T-cell (primary cell): ENCODE measurements at regions of chr11 and their contacts with region 1.

Region 1: GRCh38 chr11:110463153-110463552 is 33.4 kb downstream of the FDX1 start:
- DNase-seq: peak in 18 of 35 experiments; percentile 2 to 47 (median 6)
- ATAC-seq: peak in 1 of 4 experiments; percentile 43
- H3K4me3 ChIP-seq: no peak overlapping the region
- H3K4me3 Mint-ChIP-seq: no peak overlapping the region
- H3K27ac ChIP-seq: no peak overlapping the region
- H3K27ac Mint-ChIP-seq: no peak overlapping the region
- H3K4me1 ChIP-seq: no peaks in the 10 kb centered on the region
- H3K4me1 Mint-ChIP-seq: peaks cover 0 to 5% (median 4%) of the 10 kb centered on the region in 3 donors
- H3K27me3 ChIP-seq: no peaks in the 10 kb centered on the region
- H3K27me3 Mint-ChIP-seq: no peaks in the 10 kb centered on the region

Region 2: GRCh38 chr11:109984634-109985289 is 478.4 kb before region 1 on chr11:
- CTCF ChIA-PET with region 1: no interaction called
- POLR2A ChIA-PET with region 1: no interaction called
- DNase-seq: peak in 1 of 35 experiments; percentile 1
- ATAC-seq: no peak
- H3K4me3 ChIP-seq: no peak overlapping the region
- H3K4me3 Mint-ChIP-seq: no peak overlapping the region
- H3K27ac ChIP-seq: no peak overlapping the region
- H3K27ac Mint-ChIP-seq: no peak overlapping the region
- H3K4me1 ChIP-seq: peaks cover 0 to 11% of the 10 kb centered on the region in 2 experiments
- H3K4me1 Mint-ChIP-seq: peaks cover 0 to 5% (median 2%) of the 10 kb centered on the region in 3 donors
- H3K27me3 ChIP-seq: no peaks in the 10 kb centered on the region
- H3K27me3 Mint-ChIP-seq: peaks cover 0 to 11% of the 10 kb centered on the region in 2 donors

Region 3: GRCh38 chr11:110422306-110422905 is 40.7 kb before region 1 on chr11:
- CTCF ChIA-PET with region 1: no interaction called
- POLR2A ChIA-PET with region 1: no interaction called
- DNase-seq: no peak
- ATAC-seq: no peak
- H3K4me3 ChIP-seq: no peak overlapping the region
- H3K4me3 Mint-ChIP-seq: no peak overlapping the region
- H3K27ac ChIP-seq: no peak overlapping the region
- H3K27ac Mint-ChIP-seq: no peak overlapping the region
- H3K4me1 ChIP-seq: no peaks in the 10 kb centered on the region
- H3K4me1 Mint-ChIP-seq: no peaks in the 10 kb centered on the region
- H3K27me3 ChIP-seq: no peaks in the 10 kb centered on the region
- H3K27me3 Mint-ChIP-seq: peaks cover 3 to 4% of the 10 kb centered on the region in 2 donors

Region 4: DNA sequence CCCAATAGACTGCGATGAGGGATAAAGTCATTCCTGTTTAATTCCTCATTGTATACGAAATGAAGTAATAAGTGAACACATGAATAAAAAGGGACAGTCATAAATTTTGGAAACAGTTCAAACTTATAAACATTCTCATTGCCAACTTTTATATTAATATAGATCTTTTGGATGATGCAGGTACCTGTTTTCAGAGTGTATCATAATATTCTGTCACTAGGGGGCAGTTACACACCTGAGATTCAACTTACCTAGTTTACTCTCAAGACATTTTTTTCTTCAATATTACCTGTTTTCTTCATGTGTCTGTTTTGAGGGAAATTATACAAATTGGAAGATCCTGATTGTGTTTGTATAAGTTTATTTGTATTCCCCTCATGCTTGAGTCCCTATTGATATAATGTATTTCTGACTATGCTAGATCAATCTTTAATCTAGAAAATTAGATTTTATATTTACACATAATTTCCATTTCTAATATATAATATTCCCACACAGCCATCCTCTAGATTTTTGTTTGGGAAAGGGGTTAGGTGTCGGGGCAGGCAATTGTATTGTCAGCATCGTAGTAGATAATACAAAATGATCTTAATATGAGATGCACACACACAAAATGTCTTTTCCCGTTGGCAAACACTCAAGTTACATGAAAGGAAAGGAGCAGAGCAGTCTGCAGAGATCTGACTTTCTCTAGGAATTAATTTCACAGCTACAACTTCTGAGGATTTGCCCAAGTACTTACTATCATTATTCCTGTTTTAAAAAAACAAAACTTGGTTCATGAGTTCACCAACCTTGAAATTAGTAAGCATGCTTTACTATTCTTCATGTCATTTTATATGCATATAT is 15.0 kb before region 1 on chr11:
- CTCF ChIA-PET with region 1: no interaction called
- POLR2A ChIA-PET with region 1: no interaction called
- DNase-seq: peak in 1 of 35 experiments; percentile 41
- ATAC-seq: no peak
- H3K4me3 ChIP-seq: no peak overlapping the region
- H3K4me3 Mint-ChIP-seq: no peak overlapping the region
- H3K27ac ChIP-seq: no peak overlapping the region
- H3K27ac Mint-ChIP-seq: peak overlapping the region in 1 of 2 donors; percentile 23
- H3K4me1 ChIP-seq: peaks cover 0 to 3% of the 10 kb centered on the region in 2 experiments
- H3K4me1 Mint-ChIP-seq: peaks cover 37 to 41% (median 38%) of the 10 kb centered on the region in 3 donors
- H3K27me3 ChIP-seq: no peaks in the 10 kb centered on the region
- H3K27me3 Mint-ChIP-seq: no peaks in the 10 kb centered on the region

Region 5: DNA sequence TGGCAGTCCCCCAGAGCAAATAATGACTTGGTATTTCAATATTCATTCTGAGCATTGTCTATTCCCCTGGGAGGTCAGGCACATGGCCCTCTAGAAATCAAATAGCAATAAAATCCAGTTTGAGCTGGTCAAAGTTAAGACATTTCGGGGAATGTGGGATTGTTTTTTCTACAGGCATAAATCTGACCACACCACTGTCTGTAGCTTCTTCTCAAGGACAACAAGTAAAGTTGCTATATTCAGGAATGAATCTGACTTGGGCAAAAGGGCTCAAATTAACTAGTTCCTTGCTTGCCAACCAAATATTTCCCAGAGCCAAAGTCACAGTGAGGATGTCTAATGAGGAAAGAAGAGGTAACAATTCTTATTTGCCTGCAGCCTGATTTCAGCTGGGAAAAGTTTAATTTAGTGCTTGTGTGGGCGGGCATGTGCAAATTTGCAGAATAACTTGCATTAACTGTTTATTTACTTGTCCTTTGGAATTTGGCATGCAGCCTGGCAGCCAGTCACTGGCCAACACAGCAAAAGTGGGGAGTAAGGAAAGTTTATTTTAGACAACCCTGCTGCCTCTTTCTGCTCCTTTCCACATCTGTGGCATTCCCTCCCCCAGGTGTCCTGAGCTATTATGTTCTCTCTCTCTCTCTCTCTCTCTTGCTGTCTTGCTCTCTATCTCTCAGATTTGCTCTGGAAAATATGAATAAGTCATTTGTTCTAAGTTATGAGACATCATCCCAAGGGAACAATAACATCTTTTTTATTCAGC is 300.3 kb after region 1 on chr11:
- CTCF ChIA-PET with region 1: no interaction called
- POLR2A ChIA-PET with region 1: no interaction called
- DNase-seq: no peak
- ATAC-seq: no peak
- H3K4me3 ChIP-seq: no peak overlapping the region
- H3K4me3 Mint-ChIP-seq: no peak overlapping the region
- H3K27ac ChIP-seq: no peak overlapping the region
- H3K27ac Mint-ChIP-seq: no peak overlapping the region
- H3K4me1 ChIP-seq: no peaks in the 10 kb centered on the region
- H3K4me1 Mint-ChIP-seq: no peaks in the 10 kb centered on the region
- H3K27me3 ChIP-seq: no peaks in the 10 kb centered on the region
- H3K27me3 Mint-ChIP-seq: peaks cover 3 to 6% of the 10 kb centered on the region in 2 donors

Region 6: DNA sequence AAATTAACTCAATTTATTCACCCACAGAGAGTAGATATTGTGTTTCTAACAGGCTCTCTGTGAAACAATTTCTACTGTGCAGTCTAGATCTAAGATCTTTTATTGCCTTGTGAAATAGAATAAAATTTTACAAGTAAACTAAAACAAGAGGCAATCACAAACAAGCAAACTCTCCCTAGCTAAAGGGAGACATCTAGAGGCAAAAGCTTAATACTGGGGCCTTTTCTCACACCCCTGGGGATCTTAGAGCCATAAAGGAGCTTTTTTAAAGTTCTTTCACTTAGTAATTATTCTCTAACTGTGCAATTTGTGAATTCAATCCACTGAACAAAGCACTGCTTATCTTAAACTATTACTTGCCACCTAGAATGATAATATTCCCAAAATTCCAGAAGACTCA is 1388.5 kb after region 1 on chr11:
- CTCF ChIA-PET with region 1: no interaction called
- POLR2A ChIA-PET with region 1: interaction called in 1 of 2 experiments, 12 read pairs
- DNase-seq: no peak
- ATAC-seq: no peak
- H3K4me3 ChIP-seq: no peak overlapping the region
- H3K4me3 Mint-ChIP-seq: no peak overlapping the region
- H3K27ac ChIP-seq: no peak overlapping the region
- H3K27ac Mint-ChIP-seq: no peak overlapping the region
- H3K4me1 ChIP-seq: no peaks in the 10 kb centered on the region
- H3K4me1 Mint-ChIP-seq: no peaks in the 10 kb centered on the region
- H3K27me3 ChIP-seq: no peaks in the 10 kb centered on the region
- H3K27me3 Mint-ChIP-seq: no peaks in the 10 kb centered on the region